ENCODE measurements at regions of chr13 and their contacts with region 1.

Region 1: DNA sequence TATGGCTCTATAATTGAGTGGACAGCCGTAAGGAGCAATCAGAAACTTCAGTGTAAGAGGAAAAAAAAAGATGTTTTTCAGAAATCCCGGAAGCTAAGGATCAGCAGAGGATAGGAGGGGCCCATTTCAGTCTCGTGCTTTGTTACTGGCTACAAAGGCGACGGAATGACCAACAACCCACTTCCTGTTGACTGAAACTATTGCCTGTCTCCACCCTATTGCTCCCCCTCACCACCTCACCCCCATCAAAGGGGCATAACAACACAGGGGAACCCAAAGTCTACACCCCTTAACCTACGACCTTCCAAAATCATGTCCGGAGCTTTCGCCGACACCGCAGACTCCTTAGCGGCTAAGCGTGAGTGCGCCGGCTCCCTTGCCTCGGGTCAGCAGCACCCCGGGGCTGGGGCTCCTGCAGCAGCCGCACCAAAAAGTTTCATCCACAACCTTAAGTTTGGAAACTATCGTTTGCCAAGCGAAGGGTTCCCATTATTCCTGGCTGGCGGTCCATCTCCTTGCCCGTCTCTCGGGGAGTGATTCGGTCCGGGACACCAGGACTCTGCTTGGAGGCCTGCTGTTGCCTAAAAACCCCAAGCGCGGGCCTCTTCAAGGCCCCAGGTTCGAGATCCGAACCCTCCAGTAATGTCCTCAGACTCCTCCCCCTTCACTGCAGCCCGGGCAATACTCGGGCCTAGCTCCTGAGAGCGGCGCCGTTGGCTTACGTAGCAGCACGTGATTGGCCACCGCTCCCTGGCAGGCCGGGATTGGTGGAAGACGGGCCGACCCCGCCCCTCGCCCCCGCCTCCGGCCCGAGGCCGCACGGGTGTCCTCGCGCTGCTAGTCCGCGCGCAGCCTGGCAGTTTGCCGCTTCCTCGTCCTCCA is at the start of gene TPP2:
- DNase-seq: peak; percentile 95 to 99 (median 97)
- ATAC-seq: peak; percentile 91
- H3K4me3 ChIP-seq: peak within 1 kb of the TSS; percentile 97
- H3K4me3 Mint-ChIP-seq: peak within 1 kb of the TSS; percentile 90 to 99 (median 98)
- H3K27ac ChIP-seq: peak within 1 kb of the TSS; percentile 94
- H3K27ac Mint-ChIP-seq: peak within 1 kb of the TSS; percentile 99 to 100 (median 100)
- H3K4me1 ChIP-seq: peaks cover 34 to 45% of the 10 kb centered on the region in 2 donors
- H3K4me1 Mint-ChIP-seq: peaks cover 37 to 70% (median 65%) of the 10 kb centered on the region in 7 donors
- H3K27me3 ChIP-seq: no peaks in the 10 kb centered on the region
- H3K27me3 Mint-ChIP-seq: no peaks in the 10 kb centered on the region
- total RNA-seq, gene TPP2: 92.1 to 158 (median 119) TPM

Region 2: DNA sequence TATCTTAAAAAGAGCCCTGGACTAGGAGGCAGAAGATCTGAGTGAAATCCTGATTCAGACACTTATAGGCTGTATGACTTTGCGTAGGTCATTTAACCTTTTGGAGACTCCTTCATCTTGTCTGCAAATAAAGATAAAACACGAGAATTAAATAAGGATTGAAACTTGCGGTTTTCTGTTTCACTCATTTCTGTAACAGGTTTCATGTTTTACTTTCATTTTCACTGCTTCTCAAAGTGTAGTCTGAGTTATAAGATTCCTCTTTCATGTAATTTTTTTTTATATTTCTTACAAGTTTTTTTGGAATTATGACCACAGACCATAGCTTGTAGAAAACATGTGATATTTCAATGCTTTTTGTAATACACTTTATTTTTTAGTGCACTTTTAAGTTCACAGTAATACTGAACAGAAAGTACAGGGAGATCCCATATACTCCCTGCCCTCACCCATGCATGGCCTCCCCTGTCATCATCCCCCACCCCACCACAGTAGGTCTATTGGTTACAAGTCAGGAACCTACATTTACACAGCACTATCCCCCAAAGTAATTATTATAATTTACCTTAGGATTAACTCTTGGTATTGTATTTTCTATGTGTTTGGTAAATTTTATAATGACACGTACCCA is 969.3 kb before region 1 on chr13:
- CTCF ChIA-PET with region 1: no interaction called
- POLR2A ChIA-PET with region 1: no interaction called
- intact Hi-C with region 1: loop called in 1 of 2 experiments (anchors 10 kb)
- DNase-seq: peak in 6 of 9 donors; percentile 24 to 62 (median 48)
- ATAC-seq: peak; percentile 73
- H3K4me3 ChIP-seq: peak overlapping the region; percentile 40
- H3K4me3 Mint-ChIP-seq: peak overlapping the region; percentile 63 to 92 (median 78)
- H3K27ac ChIP-seq: peak overlapping the region; percentile 67
- H3K27ac Mint-ChIP-seq: peak overlapping the region; percentile 15 to 89 (median 76)
- H3K4me1 ChIP-seq: peaks cover 29 to 33% of the 10 kb centered on the region in 2 donors
- H3K4me1 Mint-ChIP-seq: peaks cover 9 to 49% (median 48%) of the 10 kb centered on the region in 7 donors
- H3K27me3 ChIP-seq: no peaks in the 10 kb centered on the region
- H3K27me3 Mint-ChIP-seq: peaks cover 0 to 27% (median 0%) of the 10 kb centered on the region in 5 donors

Region 3: DNA sequence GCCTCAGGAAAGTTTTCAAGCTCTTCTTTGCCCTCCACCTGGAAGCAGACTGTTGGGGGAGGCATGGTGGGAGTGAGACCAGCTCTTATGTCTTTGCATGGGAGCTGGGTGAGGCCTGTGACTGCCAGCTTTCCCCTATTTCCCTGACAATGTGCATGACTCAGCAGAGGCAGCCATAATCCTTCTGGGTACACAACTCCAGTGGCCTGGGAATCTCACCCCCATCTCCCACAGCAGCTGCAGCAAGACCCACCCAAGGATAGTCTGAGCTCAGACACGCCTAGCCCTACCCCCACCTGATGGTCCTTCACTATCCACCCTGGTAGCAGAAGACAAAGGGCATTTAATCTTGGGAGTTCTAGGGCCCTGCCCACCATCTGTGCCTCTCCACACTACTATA is 153.2 kb before region 1 on chr13:
- CTCF ChIA-PET with region 1: no interaction called
- POLR2A ChIA-PET with region 1: no interaction called
- intact Hi-C with region 1: no loop called
- DNase-seq: no peak
- ATAC-seq: no peak
- H3K4me3 ChIP-seq: no peak overlapping the region
- H3K4me3 Mint-ChIP-seq: no peak overlapping the region
- H3K27ac ChIP-seq: no peak overlapping the region
- H3K27ac Mint-ChIP-seq: no peak overlapping the region
- H3K4me1 ChIP-seq: no peaks in the 10 kb centered on the region
- H3K4me1 Mint-ChIP-seq: no peaks in the 10 kb centered on the region
- H3K27me3 ChIP-seq: no peaks in the 10 kb centered on the region
- H3K27me3 Mint-ChIP-seq: peaks cover 6 to 36% (median 32%) of the 10 kb centered on the region in 5 donors

Region 4: DNA sequence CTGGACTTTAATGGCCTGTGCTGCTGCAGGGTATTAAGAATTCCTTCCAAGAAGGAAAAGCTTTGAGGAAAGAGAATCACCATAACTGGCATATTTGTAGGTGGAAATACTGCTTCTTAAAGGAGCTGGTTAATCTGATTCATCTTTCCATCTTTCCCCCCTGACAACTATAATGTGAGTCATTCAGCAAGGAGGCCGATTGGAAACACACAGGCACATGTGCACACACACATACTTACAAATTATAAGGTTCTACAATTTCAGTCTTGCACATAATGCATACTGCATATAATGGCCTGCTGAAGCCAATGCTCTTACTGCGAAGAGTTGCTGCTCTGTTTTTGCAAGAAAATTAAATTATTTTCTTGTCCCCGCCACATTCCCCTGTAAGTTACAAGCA is 78.4 kb before region 1 on chr13:
- CTCF ChIA-PET with region 1: no interaction called
- POLR2A ChIA-PET with region 1: no interaction called
- intact Hi-C with region 1: no loop called
- DNase-seq: no peak
- ATAC-seq: no peak
- H3K4me3 ChIP-seq: no peak overlapping the region
- H3K4me3 Mint-ChIP-seq: no peak overlapping the region
- H3K27ac ChIP-seq: no peak overlapping the region
- H3K27ac Mint-ChIP-seq: no peak overlapping the region
- H3K4me1 ChIP-seq: no peaks in the 10 kb centered on the region
- H3K4me1 Mint-ChIP-seq: no peaks in the 10 kb centered on the region
- H3K27me3 ChIP-seq: no peaks in the 10 kb centered on the region
- H3K27me3 Mint-ChIP-seq: peaks cover 0 to 41% (median 22%) of the 10 kb centered on the region in 5 donors

Region 5: DNA sequence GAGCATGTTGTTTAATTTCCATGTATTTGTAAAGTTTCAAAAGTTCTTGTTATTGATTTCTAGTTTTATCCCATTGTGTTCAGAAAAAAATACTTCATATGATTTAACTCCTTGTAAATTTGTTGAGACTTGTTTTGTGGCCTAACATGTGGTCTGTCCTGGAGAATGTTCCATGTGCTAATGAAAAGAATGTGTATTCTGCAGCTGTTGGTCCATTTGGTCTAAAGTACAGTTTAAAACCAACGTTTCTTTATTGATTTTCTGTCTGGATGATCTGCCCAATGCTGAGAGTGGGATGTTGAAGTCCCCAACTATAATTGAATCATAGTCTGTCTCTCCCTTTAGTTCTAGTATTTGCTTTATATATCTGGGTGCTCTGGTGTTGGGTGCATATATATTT is 34.5 kb before region 1 on chr13:
- CTCF ChIA-PET with region 1: no interaction called
- POLR2A ChIA-PET with region 1: no interaction called
- intact Hi-C with region 1: no loop called
- DNase-seq: no peak
- ATAC-seq: no peak
- H3K4me3 ChIP-seq: no peak overlapping the region
- H3K4me3 Mint-ChIP-seq: no peak overlapping the region
- H3K27ac ChIP-seq: no peak overlapping the region
- H3K27ac Mint-ChIP-seq: no peak overlapping the region
- H3K4me1 ChIP-seq: no peaks in the 10 kb centered on the region
- H3K4me1 Mint-ChIP-seq: no peaks in the 10 kb centered on the region
- H3K27me3 ChIP-seq: peaks cover 0 to 4% of the 10 kb centered on the region in 2 donors
- H3K27me3 Mint-ChIP-seq: peaks cover 9 to 23% (median 16%) of the 10 kb centered on the region in 5 donors

Region 6: GRCh38 chr13:102609696-102610095 is 13.3 kb after region 1 on chr13:
- CTCF ChIA-PET with region 1: interaction called, 19 read pairs
- POLR2A ChIA-PET with region 1: interaction called, 115 read pairs
- intact Hi-C with region 1: loop called (anchors 1 to 2 kb)
- DNase-seq: peak in 4 of 9 donors; percentile 14 to 34 (median 28)
- ATAC-seq: no peak
- H3K4me3 ChIP-seq: no peak overlapping the region
- H3K4me3 Mint-ChIP-seq: peak overlapping the region in 8 of 10 donors; percentile 0 to 37 (median 13)
- H3K27ac ChIP-seq: no peak overlapping the region
- H3K27ac Mint-ChIP-seq: peak overlapping the region in 6 of 9 donors; percentile 2 to 59 (median 30)
- H3K4me1 ChIP-seq: peaks cover 5 to 10% of the 10 kb centered on the region in 2 donors
- H3K4me1 Mint-ChIP-seq: peaks cover 30 to 81% (median 68%) of the 10 kb centered on the region in 7 donors
- H3K27me3 ChIP-seq: no peaks in the 10 kb centered on the region
- H3K27me3 Mint-ChIP-seq: no peaks in the 10 kb centered on the region

Region 7: DNA sequence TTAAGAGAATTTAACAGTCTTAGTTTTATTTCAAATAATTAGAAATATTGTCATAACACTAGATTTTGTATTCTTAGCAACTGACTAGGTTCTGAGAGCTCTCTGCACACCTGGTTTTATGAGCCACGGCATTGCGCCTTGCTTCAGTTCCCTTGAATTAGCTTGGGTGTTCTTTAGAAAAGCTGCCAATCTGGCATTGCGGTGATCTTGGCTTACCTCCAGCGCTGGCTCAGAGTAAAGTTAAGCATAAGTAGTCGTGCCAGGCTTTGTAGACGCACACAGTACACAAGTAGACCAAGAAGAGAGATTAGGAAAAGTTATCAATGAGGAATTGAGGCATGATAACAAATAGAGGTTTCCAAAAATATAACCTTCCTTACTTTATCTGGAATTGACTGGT is 46.1 kb after region 1 on chr13:
- CTCF ChIA-PET with region 1: interaction called, 4 read pairs
- POLR2A ChIA-PET with region 1: interaction called, 25 read pairs
- intact Hi-C with region 1: loop called in 1 of 2 experiments (anchors 2 kb)
- DNase-seq: no peak
- ATAC-seq: no peak
- H3K4me3 ChIP-seq: no peak overlapping the region
- H3K4me3 Mint-ChIP-seq: no peak overlapping the region
- H3K27ac ChIP-seq: no peak overlapping the region
- H3K27ac Mint-ChIP-seq: peak overlapping the region in 1 of 9 donors; percentile 3
- H3K4me1 ChIP-seq: no peaks in the 10 kb centered on the region
- H3K4me1 Mint-ChIP-seq: peaks cover 0 to 6% (median 3%) of the 10 kb centered on the region in 7 donors
- H3K27me3 ChIP-seq: no peaks in the 10 kb centered on the region
- H3K27me3 Mint-ChIP-seq: no peaks in the 10 kb centered on the region

Region 8: DNA sequence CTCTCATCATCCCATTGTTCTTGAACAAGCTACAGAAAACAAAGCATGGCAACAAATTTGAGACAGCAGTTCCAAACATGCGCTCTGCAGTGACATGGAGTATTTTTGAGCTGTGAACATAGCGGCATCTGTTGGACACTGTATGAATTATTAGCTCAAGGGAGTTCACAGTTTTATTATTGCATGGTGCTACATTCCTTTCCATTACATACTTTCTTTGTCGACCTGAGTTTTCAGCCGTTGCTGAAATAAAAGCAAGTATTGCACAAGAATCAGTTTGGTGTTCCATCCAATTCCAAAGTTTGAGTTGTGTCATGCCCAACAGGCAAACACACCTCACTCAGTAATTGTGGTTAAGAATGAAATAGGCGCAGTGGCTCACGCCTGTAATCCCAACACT is 128.5 kb after region 1 on chr13:
- CTCF ChIA-PET with region 1: interaction called, 3 read pairs
- POLR2A ChIA-PET with region 1: interaction called, 3 read pairs
- intact Hi-C with region 1: loop called (anchors 1 kb)
- DNase-seq: peak in 1 of 9 donors; percentile 6
- ATAC-seq: peak; percentile 54
- H3K4me3 ChIP-seq: no peak overlapping the region
- H3K4me3 Mint-ChIP-seq: no peak overlapping the region
- H3K27ac ChIP-seq: no peak overlapping the region
- H3K27ac Mint-ChIP-seq: no peak overlapping the region
- H3K4me1 ChIP-seq: no peaks in the 10 kb centered on the region
- H3K4me1 Mint-ChIP-seq: peaks cover 0 to 3% (median 0%) of the 10 kb centered on the region in 7 donors
- H3K27me3 ChIP-seq: no peaks in the 10 kb centered on the region
- H3K27me3 Mint-ChIP-seq: peaks cover 8 to 40% (median 26%) of the 10 kb centered on the region in 5 donors

Region 9: DNA sequence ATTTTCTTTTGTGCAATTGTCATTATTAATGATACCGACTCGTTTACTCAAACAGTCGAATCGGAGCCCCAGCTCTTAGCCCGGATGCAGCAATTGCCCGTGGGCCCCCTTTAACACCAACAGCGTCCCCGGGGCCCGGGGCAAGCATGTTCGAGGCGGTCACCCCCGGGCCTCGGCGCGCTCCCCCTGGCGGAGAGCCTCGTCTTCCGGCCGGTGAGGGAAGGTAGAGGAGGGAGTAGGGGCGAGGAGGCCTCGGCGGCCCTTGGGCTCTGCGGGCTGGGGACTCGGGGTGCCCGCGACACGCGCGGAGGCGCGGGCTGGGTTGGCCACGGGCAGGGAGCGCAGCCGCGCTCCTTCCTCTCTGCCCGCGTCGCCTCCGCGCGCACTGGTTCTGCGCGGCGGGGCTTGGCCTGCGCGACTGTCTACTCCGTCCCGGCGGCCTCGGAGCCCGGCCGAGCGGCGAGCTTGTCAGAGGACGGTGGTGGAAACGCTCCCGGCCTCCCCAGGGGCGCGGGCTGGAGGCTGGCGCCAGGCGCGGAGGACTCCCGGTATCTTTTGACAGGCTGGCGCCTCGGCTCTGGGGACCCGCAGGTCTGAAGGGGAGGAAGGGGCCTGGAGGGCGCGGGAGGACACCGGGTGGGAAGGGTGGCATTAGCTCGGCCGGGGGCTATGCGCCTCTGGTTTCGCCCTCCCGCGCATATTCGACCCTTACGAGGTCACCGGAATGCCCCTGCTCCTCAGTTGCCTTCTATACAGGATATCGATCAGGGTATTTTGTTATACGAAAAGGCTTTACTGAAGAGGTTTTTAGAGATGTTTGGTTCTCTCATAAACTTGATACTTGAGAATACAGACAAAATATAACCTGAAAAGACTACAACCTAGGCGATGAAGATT is 204.0 kb after region 1 on chr13:
- CTCF ChIA-PET with region 1: interaction called, 3 read pairs
- POLR2A ChIA-PET with region 1: interaction called, 8 read pairs
- intact Hi-C with region 1: loop called (anchors 1 kb)
- DNase-seq: peak; percentile 58 to 92 (median 69)
- ATAC-seq: peak; percentile 90
- H3K4me3 ChIP-seq: peak overlapping the region; percentile 74
- H3K4me3 Mint-ChIP-seq: peak overlapping the region; percentile 80 to 98 (median 87)
- H3K27ac ChIP-seq: no peak overlapping the region
- H3K27ac Mint-ChIP-seq: peak overlapping the region in 8 of 9 donors; percentile 11 to 90 (median 47)
- H3K4me1 ChIP-seq: peaks cover 6% of the 10 kb centered on the region in 2 donors
- H3K4me1 Mint-ChIP-seq: peaks cover 6 to 42% (median 19%) of the 10 kb centered on the region in 7 donors
- H3K27me3 ChIP-seq: peaks cover 0 to 3% of the 10 kb centered on the region in 2 donors
- H3K27me3 Mint-ChIP-seq: peaks cover 0 to 28% (median 17%) of the 10 kb centered on the region in 5 donors

Measured in naive thymus-derived CD4-positive, alpha-beta T cell (primary cell).